Stomach (tissue), 19 donors: ENCODE measurements at regions of chr5 and their contacts with region 1.

Region 1: GRCh38 chr5:82165740-82166530 is 112.2 kb downstream of the RPS23 start:
- DNase-seq: peak; percentile 65 to 95
- H3K4me3 ChIP-seq: no peak overlapping the region
- H3K27ac ChIP-seq: peak overlapping the region in 3 of 5 donors; percentile 38 to 52 (median 40)
- H3K4me1 ChIP-seq: peaks cover 5 to 36% (median 26%) of the 10 kb centered on the region in 4 donors
- H3K27me3 ChIP-seq: no peaks in the 10 kb centered on the region
- CTCF ChIP-seq: peak in 5 of 7 experiments; percentile 52 to 67 (median 64)
- EP300 ChIP-seq: no peak
- POLR2A ChIP-seq: no peak

Region 2: DNA sequence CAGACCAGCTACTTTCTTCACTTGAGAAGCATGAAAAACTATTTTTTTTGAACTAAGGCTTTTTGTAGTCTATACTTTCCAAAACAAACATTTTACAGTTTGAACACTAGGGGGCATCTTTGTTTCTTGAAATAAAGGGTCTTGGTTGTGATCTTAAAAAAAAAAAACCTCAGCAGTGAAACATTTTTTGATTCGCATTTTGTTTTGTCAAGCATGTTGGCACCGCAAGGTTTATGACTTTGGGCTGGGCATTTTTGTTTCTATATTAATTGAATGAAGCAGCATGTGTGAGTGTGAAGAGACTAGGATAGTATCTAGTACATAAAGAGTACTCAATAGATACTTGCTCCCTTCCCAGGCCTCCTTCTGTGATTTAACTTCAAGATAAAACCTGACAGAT is 740.4 kb before region 1 on chr5:
- intact Hi-C with region 1: loop called (anchors 5 kb)
- DNase-seq: peak in 1 of 2 donors; percentile 60
- H3K4me3 ChIP-seq: no peak overlapping the region
- H3K27ac ChIP-seq: peak overlapping the region in 2 of 5 donors; percentile 11 to 44
- H3K4me1 ChIP-seq: peaks cover 0 to 33% (median 8%) of the 10 kb centered on the region in 4 donors
- H3K27me3 ChIP-seq: no peaks in the 10 kb centered on the region
- CTCF ChIP-seq: peak in 5 of 7 experiments; percentile 19 to 64 (median 36)
- EP300 ChIP-seq: no peak
- POLR2A ChIP-seq: no peak

Region 3: GRCh38 chr5:81506900-81507588 is 658.9 kb before region 1 on chr5:
- intact Hi-C with region 1: loop called (anchors 10 kb)
- DNase-seq: peak; percentile 42 to 94
- H3K4me3 ChIP-seq: no peak overlapping the region
- H3K27ac ChIP-seq: peak overlapping the region in 2 of 5 donors; percentile 58 to 61
- H3K4me1 ChIP-seq: peaks cover 7 to 28% (median 14%) of the 10 kb centered on the region in 4 donors
- H3K27me3 ChIP-seq: no peaks in the 10 kb centered on the region
- CTCF ChIP-seq: peak in 5 of 7 experiments; percentile 72 to 83 (median 77)
- EP300 ChIP-seq: no peak
- POLR2A ChIP-seq: no peak

Region 4: GRCh38 chr5:81751009-81751835 is 414.7 kb before region 1 on chr5 and contains the start of gene SSBP2:
- intact Hi-C with region 1: loop called (anchors 10 kb)
- DNase-seq: peak; percentile 99 to 100
- H3K4me3 ChIP-seq: peak within 1 kb of the TSS; percentile 85 to 97 (median 94)
- H3K27ac ChIP-seq: peak within 1 kb of the TSS; percentile 90 to 100 (median 96)
- H3K4me1 ChIP-seq: peaks cover 11 to 70% (median 42%) of the 10 kb centered on the region in 4 donors
- H3K27me3 ChIP-seq: peaks cover 0 to 4% (median 0%) of the 10 kb centered on the region in 3 donors
- CTCF ChIP-seq: peak in 1 of 7 experiments; percentile 12
- EP300 ChIP-seq: peak; percentile 80
- POLR2A ChIP-seq: peak in 1 of 4 donors; percentile 49
- total RNA-seq, gene SSBP2: 0.87 to 86.2 (median 37.3) TPM